ENCODE measurements at regions of chr17 and their contacts with region 1.

Region 1: GRCh38 chr17:16653209-16654041 is at the start of gene ZNF624:
- DNase-seq: peak; percentile 80
- H3K4me3 Mint-ChIP-seq: peak within 1 kb of the TSS; percentile 87
- H3K27ac Mint-ChIP-seq: peak within 1 kb of the TSS; percentile 44
- H3K4me1 Mint-ChIP-seq: peaks cover 13% of the 10 kb centered on the region
- H3K27me3 Mint-ChIP-seq: peaks cover 2% of the 10 kb centered on the region
- total RNA-seq, gene ZNF624: 2.0 and 2.8 TPM in 2 replicates

Region 2: DNA sequence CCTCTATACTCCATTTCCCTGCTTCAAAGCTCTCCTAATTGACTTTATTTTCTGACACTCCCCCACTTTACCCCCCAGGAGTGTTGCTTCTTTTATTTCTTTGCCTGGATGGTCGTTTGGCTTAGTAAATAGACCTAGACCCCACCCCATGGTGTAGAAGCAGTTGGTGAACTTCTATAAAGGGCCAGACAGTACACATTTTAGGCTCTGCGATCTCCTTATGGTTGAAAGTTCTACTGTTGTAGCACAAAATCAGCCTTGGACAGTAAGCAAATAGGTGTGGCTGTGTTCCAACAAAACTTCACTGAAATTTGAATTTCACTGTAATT is 116.3 kb before region 1 on chr17:
- intact Hi-C with region 1: loop called (anchors 1 kb)
- DNase-seq: no peak
- H3K4me3 Mint-ChIP-seq: peak overlapping the region; percentile 91
- H3K27ac Mint-ChIP-seq: peak overlapping the region; percentile 52
- H3K4me1 Mint-ChIP-seq: peaks cover 16% of the 10 kb centered on the region
- H3K27me3 Mint-ChIP-seq: no peaks in the 10 kb centered on the region

Measured in activated T-helper 1 cell treated with anti-CD3 and anti-CD28 coated beads, Interleukin-12 subunit alpha, Interleukin-12 subunit beta, Interleukin-2, Interleukin-4 antibody, amounts not matched to agents 30 ng/mL and 10 ng/mL and 1 ng/mL, durations not matched to agents 14 hours and 24 hours and 36 hours (primary cell).